ENCODE measurements at regions of chr19 and their contacts with region 1.

Region 1: DNA sequence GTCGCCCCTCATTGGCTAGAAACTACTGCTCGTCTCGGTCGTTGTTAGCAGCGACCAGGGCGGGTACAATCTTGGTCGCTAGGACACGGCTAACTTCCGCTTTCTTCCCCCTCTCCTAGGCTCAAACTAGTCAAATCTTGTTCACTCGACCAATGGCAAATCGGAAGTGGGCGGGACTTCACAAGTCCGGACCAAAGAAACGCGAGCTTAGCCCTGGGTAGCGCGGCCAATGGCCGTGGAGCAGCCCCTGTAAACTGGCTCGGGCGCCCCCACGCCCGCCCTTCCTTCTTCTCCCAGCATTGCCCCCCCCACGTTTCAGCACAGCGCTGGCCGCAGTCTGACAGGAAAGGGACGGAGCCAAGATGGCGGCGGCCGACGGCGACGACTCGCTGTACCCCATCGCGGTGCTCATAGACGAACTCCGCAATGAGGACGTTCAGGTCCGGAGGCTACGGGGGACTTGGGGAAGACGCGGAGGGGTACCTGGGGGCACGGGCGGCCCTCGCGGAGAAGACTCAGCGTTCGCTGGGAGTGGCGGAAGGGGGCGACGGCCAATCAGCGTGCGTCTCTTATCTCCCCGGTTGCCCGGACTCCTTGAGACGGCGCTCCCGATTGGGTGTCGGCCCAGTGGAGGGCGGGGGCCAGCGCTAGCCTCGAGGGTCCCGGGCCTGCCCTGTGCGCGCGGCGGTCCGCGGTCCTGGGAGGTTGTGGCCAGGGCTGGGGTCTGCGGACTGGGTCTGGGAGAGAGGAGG is at the start of gene PPP2R1A:
- DNase-seq: peak; percentile 98 to 100 (median 99)

Region 2: DNA sequence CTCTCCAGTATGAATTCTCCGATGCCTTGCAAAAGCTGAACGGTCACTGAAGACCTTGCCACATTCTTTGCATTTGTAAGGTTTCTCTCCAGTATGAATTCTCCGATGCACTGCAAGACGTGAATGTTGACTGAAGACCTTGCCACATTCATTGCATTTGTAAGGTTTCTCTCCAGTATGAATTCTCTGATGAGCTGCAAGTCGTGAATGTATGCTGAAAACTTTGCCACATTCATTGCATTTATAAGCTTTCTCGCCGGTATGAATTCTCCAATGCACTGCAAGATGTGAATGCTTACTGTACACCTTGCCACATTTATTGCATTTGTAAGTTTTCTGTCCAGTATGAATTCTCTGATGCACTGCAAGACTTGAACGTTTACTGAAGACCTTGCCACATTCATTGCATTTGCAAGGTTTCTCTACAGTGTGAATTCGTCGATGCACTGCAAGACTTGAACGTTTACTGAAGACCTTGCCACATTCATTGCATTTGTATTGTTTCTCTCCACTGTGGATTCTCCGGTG is 74.3 kb before region 1 on chr19:
- intact Hi-C with region 1: no loop called
- DNase-seq: no peak

Region 3: GRCh38 chr19:52171321-52172169 is 18.4 kb before region 1 on chr19 and contains the start of gene ZNF836:
- intact Hi-C with region 1: loop called (anchors 1 kb)
- DNase-seq: peak; percentile 62 to 96 (median 82)